ENCODE measurements at regions of chr5 and their contacts with region 1.

Region 1: DNA sequence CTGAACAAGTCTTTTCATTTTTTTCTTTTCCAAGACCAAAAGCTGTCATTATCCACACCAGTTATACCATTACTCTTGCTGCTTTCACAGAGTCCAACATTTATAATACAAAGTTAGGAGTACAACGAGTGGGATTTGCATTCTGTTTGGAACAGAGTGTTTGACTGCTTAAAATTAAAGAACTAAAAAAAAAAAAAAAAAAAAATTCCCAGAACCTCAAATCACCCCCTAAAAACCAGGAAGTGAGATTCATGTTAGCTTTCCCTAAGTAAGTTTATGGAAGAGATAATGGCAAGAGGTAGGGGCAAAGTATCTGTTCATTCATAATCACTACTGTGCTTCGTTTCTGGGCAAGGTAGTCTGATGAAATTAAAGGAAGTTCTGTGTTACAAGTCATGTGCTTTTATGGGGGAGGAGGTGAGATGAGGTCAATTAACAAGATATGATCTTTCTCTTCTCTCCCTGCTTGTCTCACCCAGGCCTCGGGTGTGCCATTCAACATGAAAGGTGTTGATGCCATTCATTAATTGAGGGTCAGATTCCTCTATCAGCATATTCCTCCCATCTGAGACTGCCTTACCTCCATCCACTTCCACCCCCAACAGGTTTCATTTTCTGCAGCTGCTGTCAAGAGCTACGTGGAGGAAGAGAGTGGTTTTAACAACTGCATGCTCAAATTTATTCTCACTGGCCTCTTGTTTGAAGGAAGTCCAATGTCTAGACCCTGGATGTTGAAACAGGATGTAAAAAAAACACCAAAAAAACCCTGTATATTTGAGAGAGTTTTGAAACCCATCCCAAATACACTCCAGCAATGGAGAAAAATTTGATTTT is 58.1 kb downstream of the MARCHF3 start:
- DNase-seq: peak; percentile 45
- H3K4me3 Mint-ChIP-seq: peak overlapping the region; percentile 70
- H3K27ac Mint-ChIP-seq: peak overlapping the region; percentile 94
- H3K4me1 Mint-ChIP-seq: peaks cover 37% of the 10 kb centered on the region
- H3K27me3 Mint-ChIP-seq: no peaks in the 10 kb centered on the region

Region 2: DNA sequence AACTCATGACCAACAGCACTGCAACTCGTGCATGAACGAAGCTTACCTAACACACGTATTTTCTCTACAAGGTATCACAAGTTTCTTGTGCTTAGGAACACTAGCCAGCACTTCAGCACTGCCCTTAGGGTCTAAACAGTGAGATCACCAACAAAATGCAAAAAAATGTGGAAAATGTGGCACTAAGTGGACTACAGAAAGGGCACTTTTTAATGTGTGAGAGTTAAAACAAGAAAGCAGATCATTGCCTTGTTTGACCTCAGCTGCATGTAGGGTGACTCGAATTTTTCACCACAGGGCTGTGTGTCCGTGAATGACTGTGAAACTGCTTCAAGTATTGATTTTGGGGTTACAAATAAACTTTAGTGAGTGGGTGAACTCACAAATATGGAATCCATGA is 32.4 kb before region 1 on chr5:
- CTCF ChIA-PET with region 1: no interaction called
- intact Hi-C with region 1: loop called (anchors 2 kb)
- DNase-seq: no peak
- H3K4me3 Mint-ChIP-seq: no peak overlapping the region
- H3K27ac Mint-ChIP-seq: no peak overlapping the region
- H3K4me1 Mint-ChIP-seq: peaks cover 12% of the 10 kb centered on the region
- H3K27me3 Mint-ChIP-seq: no peaks in the 10 kb centered on the region

Region 3: DNA sequence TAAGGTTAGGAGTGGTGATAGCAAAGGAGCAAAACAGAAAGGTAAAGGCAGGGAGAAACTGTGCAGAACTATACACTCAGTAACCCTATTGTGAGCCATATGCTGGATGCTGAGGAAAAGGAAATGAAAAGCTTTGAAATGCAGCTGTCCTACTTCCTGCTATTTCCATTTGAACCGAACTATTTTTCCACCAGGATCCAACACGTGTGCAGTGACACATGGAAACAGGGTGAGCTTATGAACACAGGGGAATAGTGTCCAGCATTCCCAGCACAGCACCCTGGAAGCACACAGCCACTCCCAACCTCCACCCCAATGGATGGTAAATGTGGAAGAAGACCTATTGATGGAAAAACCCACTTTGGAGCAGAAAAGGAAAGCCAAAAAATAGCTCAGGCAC is 1042.3 kb after region 1 on chr5:
- CTCF ChIA-PET with region 1: no interaction called
- intact Hi-C with region 1: no loop called
- DNase-seq: no peak
- H3K4me3 Mint-ChIP-seq: no peak overlapping the region
- H3K27ac Mint-ChIP-seq: no peak overlapping the region
- H3K4me1 Mint-ChIP-seq: no peaks in the 10 kb centered on the region
- H3K27me3 Mint-ChIP-seq: no peaks in the 10 kb centered on the region